Activated CD4-positive, alpha-beta T cell treated with anti-CD3 and anti-CD28 coated beads, Interleukin-2, amount 10 ng/mL, durations not matched to agents 24 days and 14 days (primary cell): ENCODE measurements at regions of chr9 and their contacts with region 1.

Region 1: GRCh38 chr9:70324963-70325362 is 66.2 kb downstream of the SMC5 start:
- DNase-seq: no peak
- H3K4me3 Mint-ChIP-seq: no peak overlapping the region
- H3K27ac Mint-ChIP-seq: no peak overlapping the region
- H3K4me1 Mint-ChIP-seq: peaks cover 4% of the 10 kb centered on the region
- H3K27me3 Mint-ChIP-seq: no peaks in the 10 kb centered on the region

Region 2: DNA sequence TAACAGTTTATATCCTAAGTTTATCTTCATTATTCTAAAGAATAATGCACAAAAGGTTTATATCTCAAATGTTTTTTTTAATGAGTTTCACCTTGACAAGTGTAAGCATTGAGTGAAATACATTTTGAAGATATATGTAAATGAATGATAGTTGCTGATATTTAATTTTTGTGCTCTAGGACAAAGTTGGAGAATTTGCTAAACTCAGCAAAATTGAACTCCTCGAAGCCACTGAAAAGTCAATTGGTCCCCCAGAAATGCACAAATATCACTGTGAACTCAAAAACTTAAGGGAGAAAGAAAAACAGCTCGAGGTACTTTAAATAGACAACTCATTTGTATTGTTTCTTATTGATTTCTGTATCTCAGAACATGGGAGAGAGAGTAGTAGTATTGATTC is 46.7 kb before region 1 on chr9:
- intact Hi-C with region 1: loop called (anchors 10 kb)
- DNase-seq: no peak
- H3K4me3 Mint-ChIP-seq: no peak overlapping the region
- H3K27ac Mint-ChIP-seq: no peak overlapping the region
- H3K4me1 Mint-ChIP-seq: peaks cover 9% of the 10 kb centered on the region
- H3K27me3 Mint-ChIP-seq: no peaks in the 10 kb centered on the region

Region 3: DNA sequence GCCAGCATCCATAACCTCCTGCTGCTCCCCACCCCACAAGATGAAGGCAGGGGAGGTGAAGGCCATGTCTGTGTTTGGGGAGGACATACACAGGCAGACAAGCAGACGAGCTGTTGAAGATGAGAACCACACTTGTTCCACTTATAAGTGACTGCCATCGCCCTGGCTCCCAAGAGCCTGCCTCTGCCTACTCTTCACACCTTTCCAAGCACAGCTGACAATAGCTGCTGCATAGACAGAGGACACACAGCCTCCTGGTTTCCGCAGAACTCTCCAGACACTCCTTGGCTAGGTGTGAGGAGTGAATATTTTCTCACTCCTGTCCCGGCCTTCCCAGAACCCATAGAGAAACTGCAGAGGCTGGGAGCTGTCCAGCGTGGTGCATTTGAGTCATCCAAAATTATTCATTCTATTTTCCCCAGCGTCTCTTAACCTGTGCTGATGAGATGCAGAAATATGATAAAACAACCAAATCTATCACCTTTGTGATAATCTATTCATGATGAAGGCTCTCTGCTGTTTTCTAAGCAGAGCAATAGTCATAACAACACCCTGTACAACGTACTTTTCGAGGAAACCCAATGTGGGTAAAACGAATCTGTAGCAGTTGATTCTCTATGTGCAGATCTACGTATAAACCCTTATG is 64.8 kb after region 1 on chr9:
- intact Hi-C with region 1: no loop called
- DNase-seq: no peak
- H3K4me3 Mint-ChIP-seq: no peak overlapping the region
- H3K27ac Mint-ChIP-seq: peak overlapping the region; percentile 69
- H3K4me1 Mint-ChIP-seq: peaks cover 41% of the 10 kb centered on the region
- H3K27me3 Mint-ChIP-seq: no peaks in the 10 kb centered on the region